ENCODE measurements at regions of chr4 and their contacts with region 1.

Region 1: GRCh38 chr4:146522098-146522868 is 543 bp upstream of the SLC10A7 start:
- DNase-seq: peak; percentile 80
- H3K4me3 Mint-ChIP-seq: no peak overlapping the region
- H3K27ac Mint-ChIP-seq: no peak overlapping the region
- H3K4me1 Mint-ChIP-seq: peaks cover 28% of the 10 kb centered on the region
- H3K27me3 Mint-ChIP-seq: no peaks in the 10 kb centered on the region

Region 2: GRCh38 chr4:145625677-145626622 is 896.3 kb before region 1 on chr4:
- intact Hi-C with region 1: no loop called
- DNase-seq: no peak
- H3K4me3 Mint-ChIP-seq: no peak overlapping the region
- H3K27ac Mint-ChIP-seq: no peak overlapping the region
- H3K4me1 Mint-ChIP-seq: peaks cover 43% of the 10 kb centered on the region
- H3K27me3 Mint-ChIP-seq: no peaks in the 10 kb centered on the region

Region 3: DNA sequence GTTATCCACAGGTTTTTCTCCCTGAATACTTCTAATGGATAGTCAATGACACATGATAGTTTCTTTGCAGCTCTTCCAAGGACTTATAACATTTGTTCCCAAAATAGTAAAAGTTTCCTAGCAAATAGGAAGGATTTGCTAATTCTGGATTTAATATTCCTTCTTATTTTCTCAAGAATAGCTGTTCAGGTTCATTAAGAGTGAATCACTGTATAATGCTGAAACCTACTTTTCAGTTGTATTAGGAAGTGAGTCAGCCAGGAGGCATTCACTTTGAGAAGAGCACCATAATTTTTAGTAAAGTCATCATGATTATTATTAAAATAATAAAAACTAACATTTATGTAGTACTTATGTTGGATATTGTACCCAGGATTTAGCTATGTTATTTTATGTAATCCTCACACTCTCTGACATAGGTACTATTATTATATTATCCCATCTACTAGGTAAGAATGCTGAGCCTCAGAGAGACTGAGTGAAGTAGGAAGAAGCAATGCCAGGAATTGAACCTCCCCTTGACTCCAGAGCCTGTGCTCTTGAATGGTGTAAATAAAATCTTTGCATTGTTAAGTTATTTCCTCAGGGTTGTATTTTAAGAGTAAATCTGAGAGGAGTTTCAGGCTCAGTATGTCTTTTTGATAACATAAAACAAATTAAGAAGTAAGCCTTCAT is 193.1 kb before region 1 on chr4:
- intact Hi-C with region 1: no loop called
- DNase-seq: no peak
- H3K4me3 Mint-ChIP-seq: no peak overlapping the region
- H3K27ac Mint-ChIP-seq: no peak overlapping the region
- H3K4me1 Mint-ChIP-seq: no peaks in the 10 kb centered on the region
- H3K27me3 Mint-ChIP-seq: no peaks in the 10 kb centered on the region

Region 4: GRCh38 chr4:146342600-146343192 is 179.6 kb before region 1 on chr4:
- intact Hi-C with region 1: loop called (anchors 2 kb)
- DNase-seq: no peak
- H3K4me3 Mint-ChIP-seq: no peak overlapping the region
- H3K27ac Mint-ChIP-seq: no peak overlapping the region
- H3K4me1 Mint-ChIP-seq: peaks cover 7% of the 10 kb centered on the region
- H3K27me3 Mint-ChIP-seq: no peaks in the 10 kb centered on the region

Region 5: GRCh38 chr4:146450524-146450923 is 71.8 kb before region 1 on chr4:
- intact Hi-C with region 1: loop called (anchors 1 kb)
- DNase-seq: no peak
- H3K4me3 Mint-ChIP-seq: peak overlapping the region; percentile 32
- H3K27ac Mint-ChIP-seq: peak overlapping the region; percentile 84
- H3K4me1 Mint-ChIP-seq: peaks cover 33% of the 10 kb centered on the region
- H3K27me3 Mint-ChIP-seq: no peaks in the 10 kb centered on the region

Region 6: GRCh38 chr4:146458594-146458993 is 63.7 kb before region 1 on chr4:
- intact Hi-C with region 1: loop called (anchors 1 kb)
- DNase-seq: no peak
- H3K4me3 Mint-ChIP-seq: peak overlapping the region; percentile 65
- H3K27ac Mint-ChIP-seq: peak overlapping the region; percentile 86
- H3K4me1 Mint-ChIP-seq: peaks cover 29% of the 10 kb centered on the region
- H3K27me3 Mint-ChIP-seq: no peaks in the 10 kb centered on the region

Region 7: DNA sequence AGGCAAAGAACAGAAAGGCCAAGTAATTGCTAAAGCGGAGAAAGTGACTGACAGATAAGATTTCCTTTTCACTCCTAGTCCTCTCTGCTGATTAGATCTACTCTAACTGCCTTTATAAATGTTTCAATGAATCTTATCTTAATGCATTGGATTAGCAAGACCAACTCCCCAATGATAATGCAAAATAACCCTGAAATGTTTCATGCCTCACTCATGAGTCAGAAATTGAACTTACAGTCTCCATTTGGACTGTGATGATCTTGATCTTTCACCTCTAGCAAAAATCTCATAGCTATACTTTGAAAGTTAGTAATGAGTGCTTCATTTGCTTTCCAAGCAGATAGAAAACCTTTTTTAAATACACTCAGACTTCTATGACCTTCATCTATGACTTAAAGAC is 27.0 kb before region 1 on chr4:
- intact Hi-C with region 1: loop called (anchors 1 kb)
- DNase-seq: no peak
- H3K4me3 Mint-ChIP-seq: no peak overlapping the region
- H3K27ac Mint-ChIP-seq: peak overlapping the region; percentile 52
- H3K4me1 Mint-ChIP-seq: peaks cover 26% of the 10 kb centered on the region
- H3K27me3 Mint-ChIP-seq: no peaks in the 10 kb centered on the region

Region 8: DNA sequence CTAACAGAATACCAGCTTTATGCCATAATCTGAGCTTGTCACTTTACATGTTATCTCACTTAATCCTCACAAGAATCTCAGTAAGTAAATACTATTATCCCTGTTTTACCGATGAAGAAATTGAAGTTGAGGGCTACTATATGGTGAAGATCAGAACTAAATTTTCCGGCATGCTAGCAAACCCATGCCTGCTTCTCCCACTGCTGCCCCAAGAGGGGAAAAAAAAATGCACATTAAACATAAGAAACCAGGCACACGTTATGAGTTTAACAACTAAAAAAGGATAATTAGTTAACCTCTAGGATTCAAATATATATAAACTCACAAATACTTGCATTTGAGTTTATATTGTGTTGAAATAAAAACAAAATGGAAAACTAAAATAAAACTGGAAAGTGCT is 11.3 kb before region 1 on chr4:
- intact Hi-C with region 1: loop called (anchors 1 kb)
- DNase-seq: no peak
- H3K4me3 Mint-ChIP-seq: no peak overlapping the region
- H3K27ac Mint-ChIP-seq: no peak overlapping the region
- H3K4me1 Mint-ChIP-seq: peaks cover 21% of the 10 kb centered on the region
- H3K27me3 Mint-ChIP-seq: no peaks in the 10 kb centered on the region

Region 9: GRCh38 chr4:146742416-146742815 is 220.1 kb after region 1 on chr4:
- intact Hi-C with region 1: no loop called
- DNase-seq: no peak
- H3K4me3 Mint-ChIP-seq: no peak overlapping the region
- H3K27ac Mint-ChIP-seq: no peak overlapping the region
- H3K4me1 Mint-ChIP-seq: no peaks in the 10 kb centered on the region
- H3K27me3 Mint-ChIP-seq: no peaks in the 10 kb centered on the region

Region 10: GRCh38 chr4:146932111-146932510 is 409.8 kb after region 1 on chr4:
- intact Hi-C with region 1: no loop called
- DNase-seq: no peak
- H3K4me3 Mint-ChIP-seq: no peak overlapping the region
- H3K27ac Mint-ChIP-seq: no peak overlapping the region
- H3K4me1 Mint-ChIP-seq: no peaks in the 10 kb centered on the region
- H3K27me3 Mint-ChIP-seq: peaks cover 2% of the 10 kb centered on the region

Measured in activated T-helper 2 cell treated with anti-CD3 and anti-CD28 coated beads, Interferon-gamma antibody, Interleukin-2, Interleukin-4, amounts not matched to agents 10 μg/mL and 5 μg/mL and 100 μg/mL, durations not matched to agents 14 hours and 24 hours and 36 hours (primary cell).